CD8-positive, alpha-beta T cell (primary cell): ENCODE measurements at regions of chr1 and their contacts with region 1.

Region 1: GRCh38 chr1:151399890-151400495 is 620 bp downstream of the PSMB4 start:
- DNase-seq: peak in 1 of 9 experiments; percentile 13
- ATAC-seq: no peak
- H3K4me3 ChIP-seq: peak overlapping the region; percentile 90 to 94
- H3K4me3 Mint-ChIP-seq: peak overlapping the region; percentile 89
- H3K27ac ChIP-seq: peak overlapping the region; percentile 93 to 94
- H3K27ac Mint-ChIP-seq: peak overlapping the region; percentile 97
- H3K4me1 ChIP-seq: peaks cover 16% of the 10 kb centered on the region
- H3K4me1 Mint-ChIP-seq: peaks cover 27% of the 10 kb centered on the region
- H3K27me3 ChIP-seq: no peaks in the 10 kb centered on the region
- H3K27me3 Mint-ChIP-seq: no peaks in the 10 kb centered on the region
- CTCF ChIP-seq: no peak

Region 2: DNA sequence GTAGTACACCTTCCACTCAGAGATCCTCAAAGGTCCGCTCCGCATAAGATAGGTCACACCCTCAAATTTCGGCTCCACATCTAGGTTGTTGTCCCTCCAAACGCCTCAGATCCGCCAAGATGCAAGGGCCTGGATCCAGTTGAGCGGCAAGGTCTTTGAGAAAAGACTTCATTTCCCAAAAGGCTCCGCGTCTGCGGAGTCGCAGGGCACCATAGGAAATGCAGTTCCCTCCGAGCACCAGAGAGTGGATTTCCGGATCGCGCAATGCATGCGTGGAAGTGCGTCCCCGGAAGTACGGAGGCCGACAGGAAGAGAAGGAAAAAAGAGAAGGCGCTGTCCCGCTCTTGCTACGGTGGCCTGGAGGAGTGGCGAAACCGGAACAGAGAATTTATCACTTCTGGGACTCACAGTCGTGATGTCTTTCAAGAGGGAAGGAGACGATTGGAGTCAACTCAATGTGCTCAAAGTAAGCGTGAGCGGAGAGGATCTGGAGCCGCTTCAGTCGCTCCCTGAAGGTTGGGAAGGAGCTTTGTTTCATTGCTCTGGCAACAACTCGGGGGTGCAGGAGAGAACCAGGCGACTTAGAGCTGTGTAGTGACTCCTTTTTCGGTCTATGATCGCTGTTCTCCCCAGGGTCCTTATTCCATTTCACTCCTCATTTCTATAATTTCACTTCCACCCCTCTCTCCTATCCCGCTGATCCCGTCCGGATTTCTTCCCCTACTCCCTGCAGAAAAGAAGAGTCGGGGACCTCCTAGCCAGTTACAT is 234.1 kb before region 1 on chr1 and contains the starts of genes LYSMD1 and SCNM1:
- CTCF ChIA-PET with region 1: no interaction called
- POLR2A ChIA-PET with region 1: no interaction called
- intact Hi-C with region 1: loop called in 1 of 2 experiments (anchors 5 kb)
- DNase-seq: peak; percentile 91 to 99 (median 95)
- ATAC-seq: peak; percentile 96
- H3K4me3 ChIP-seq: peak within 1 kb of the TSS; percentile 82 to 94
- H3K4me3 Mint-ChIP-seq: peak within 1 kb of the TSS; percentile 95
- H3K27ac ChIP-seq: peak within 1 kb of the TSS; percentile 72 to 77
- H3K27ac Mint-ChIP-seq: peak within 1 kb of the TSS; percentile 94
- H3K4me1 ChIP-seq: peaks cover 29% of the 10 kb centered on the region
- H3K4me1 Mint-ChIP-seq: peaks cover 50% of the 10 kb centered on the region
- H3K27me3 ChIP-seq: no peaks in the 10 kb centered on the region
- H3K27me3 Mint-ChIP-seq: no peaks in the 10 kb centered on the region
- CTCF ChIP-seq: no peak
- total RNA-seq, gene LYSMD1: 0.49 to 0.94 TPM
- total RNA-seq, gene SCNM1: 35.0 to 40.4 TPM

Region 3: DNA sequence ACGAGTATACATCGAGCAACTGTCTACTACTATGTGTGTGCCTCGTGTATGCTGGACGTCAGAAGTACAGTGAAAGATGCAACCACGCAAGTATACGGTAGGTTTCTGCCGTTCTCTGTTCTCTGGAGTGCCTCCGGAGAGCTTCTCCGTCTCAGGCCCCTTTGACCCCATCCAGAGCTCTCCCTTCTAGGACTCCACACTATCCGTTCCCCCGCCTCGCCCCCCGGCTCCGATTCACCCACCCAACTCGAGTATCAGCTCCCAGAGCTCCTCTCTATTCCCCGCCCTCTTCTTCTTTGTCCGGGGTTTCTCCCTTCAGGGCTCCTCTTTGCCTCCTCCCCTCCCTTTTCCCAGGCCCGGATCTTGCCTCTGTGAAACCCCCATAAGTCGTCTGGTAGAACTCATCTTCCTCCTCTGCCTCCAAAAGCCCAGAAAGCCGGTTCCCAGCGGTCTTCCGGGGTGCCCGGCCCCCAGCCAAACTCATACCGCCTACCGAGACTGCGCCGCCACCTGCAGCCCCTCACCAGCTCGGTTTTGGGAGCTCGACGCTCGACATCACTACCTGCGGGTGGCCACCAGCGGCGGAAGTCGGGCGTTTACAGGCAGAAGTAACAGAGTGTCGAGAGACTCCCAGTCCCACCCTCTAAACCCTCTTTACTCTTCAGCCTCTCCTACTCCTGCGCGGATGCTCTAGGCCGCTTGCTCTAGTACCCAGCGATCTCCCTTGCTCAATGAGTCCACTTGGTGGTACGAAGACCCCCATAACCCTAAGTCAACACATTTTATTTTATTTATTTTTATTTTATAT is 210.2 kb before region 1 on chr1 and contains the start of gene VPS72:
- CTCF ChIA-PET with region 1: no interaction called
- POLR2A ChIA-PET with region 1: no interaction called
- intact Hi-C with region 1: loop called (anchors 2 to 5 kb)
- DNase-seq: peak; percentile 58 to 94 (median 85)
- ATAC-seq: peak; percentile 91
- H3K4me3 ChIP-seq: peak within 1 kb of the TSS; percentile 78 to 89
- H3K4me3 Mint-ChIP-seq: peak within 1 kb of the TSS; percentile 100
- H3K27ac ChIP-seq: peak within 1 kb of the TSS; percentile 69 to 81
- H3K27ac Mint-ChIP-seq: peak within 1 kb of the TSS; percentile 99
- H3K4me1 ChIP-seq: peaks cover 18% of the 10 kb centered on the region
- H3K4me1 Mint-ChIP-seq: peaks cover 37% of the 10 kb centered on the region
- H3K27me3 ChIP-seq: no peaks in the 10 kb centered on the region
- H3K27me3 Mint-ChIP-seq: no peaks in the 10 kb centered on the region
- CTCF ChIP-seq: no peak
- total RNA-seq, gene VPS72: 7.0 to 12.1 TPM

Region 4: DNA sequence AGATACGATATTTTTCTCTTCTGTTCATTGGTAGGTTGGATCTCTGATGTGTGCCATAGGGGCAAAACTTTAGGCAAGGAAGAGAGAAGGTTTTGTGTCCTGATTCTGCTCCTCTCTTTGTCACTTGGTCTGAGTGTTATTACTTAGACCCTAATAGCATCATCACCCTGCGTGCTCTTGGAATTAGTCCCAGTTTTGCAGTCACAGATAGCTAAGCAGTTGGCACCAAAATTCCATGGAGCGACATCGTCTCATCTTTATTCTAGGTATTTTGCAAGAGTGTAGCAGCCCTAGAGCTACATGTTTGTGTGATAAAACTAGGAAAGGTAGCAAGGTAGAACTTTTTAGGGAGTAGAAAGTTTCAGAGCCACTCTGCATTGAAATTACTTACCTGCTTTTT is 177.9 kb before region 1 on chr1:
- CTCF ChIA-PET with region 1: no interaction called
- POLR2A ChIA-PET with region 1: no interaction called
- intact Hi-C with region 1: no loop called
- DNase-seq: no peak
- ATAC-seq: no peak
- H3K4me3 ChIP-seq: no peak overlapping the region
- H3K4me3 Mint-ChIP-seq: no peak overlapping the region
- H3K27ac ChIP-seq: no peak overlapping the region
- H3K27ac Mint-ChIP-seq: no peak overlapping the region
- H3K4me1 ChIP-seq: no peaks in the 10 kb centered on the region
- H3K4me1 Mint-ChIP-seq: peaks cover 13% of the 10 kb centered on the region
- H3K27me3 ChIP-seq: no peaks in the 10 kb centered on the region
- H3K27me3 Mint-ChIP-seq: no peaks in the 10 kb centered on the region
- CTCF ChIP-seq: no peak

Region 5: GRCh38 chr1:151327223-151327902 is 72.6 kb before region 1 on chr1 and contains the start of gene PI4KB:
- CTCF ChIA-PET with region 1: interaction called, 3 read pairs
- POLR2A ChIA-PET with region 1: interaction called, 14 read pairs
- intact Hi-C with region 1: loop called (anchors 1 kb)
- DNase-seq: peak; percentile 76 to 98 (median 87)
- ATAC-seq: peak; percentile 93
- H3K4me3 ChIP-seq: peak within 1 kb of the TSS; percentile 67 to 86
- H3K4me3 Mint-ChIP-seq: peak within 1 kb of the TSS; percentile 88
- H3K27ac ChIP-seq: peak within 1 kb of the TSS; percentile 75 to 98
- H3K27ac Mint-ChIP-seq: peak within 1 kb of the TSS; percentile 93
- H3K4me1 ChIP-seq: peaks cover 15% of the 10 kb centered on the region
- H3K4me1 Mint-ChIP-seq: peaks cover 47% of the 10 kb centered on the region
- H3K27me3 ChIP-seq: no peaks in the 10 kb centered on the region
- H3K27me3 Mint-ChIP-seq: no peaks in the 10 kb centered on the region
- CTCF ChIP-seq: no peak
- total RNA-seq, gene PI4KB: 63.1 to 63.2 TPM

Region 6: DNA sequence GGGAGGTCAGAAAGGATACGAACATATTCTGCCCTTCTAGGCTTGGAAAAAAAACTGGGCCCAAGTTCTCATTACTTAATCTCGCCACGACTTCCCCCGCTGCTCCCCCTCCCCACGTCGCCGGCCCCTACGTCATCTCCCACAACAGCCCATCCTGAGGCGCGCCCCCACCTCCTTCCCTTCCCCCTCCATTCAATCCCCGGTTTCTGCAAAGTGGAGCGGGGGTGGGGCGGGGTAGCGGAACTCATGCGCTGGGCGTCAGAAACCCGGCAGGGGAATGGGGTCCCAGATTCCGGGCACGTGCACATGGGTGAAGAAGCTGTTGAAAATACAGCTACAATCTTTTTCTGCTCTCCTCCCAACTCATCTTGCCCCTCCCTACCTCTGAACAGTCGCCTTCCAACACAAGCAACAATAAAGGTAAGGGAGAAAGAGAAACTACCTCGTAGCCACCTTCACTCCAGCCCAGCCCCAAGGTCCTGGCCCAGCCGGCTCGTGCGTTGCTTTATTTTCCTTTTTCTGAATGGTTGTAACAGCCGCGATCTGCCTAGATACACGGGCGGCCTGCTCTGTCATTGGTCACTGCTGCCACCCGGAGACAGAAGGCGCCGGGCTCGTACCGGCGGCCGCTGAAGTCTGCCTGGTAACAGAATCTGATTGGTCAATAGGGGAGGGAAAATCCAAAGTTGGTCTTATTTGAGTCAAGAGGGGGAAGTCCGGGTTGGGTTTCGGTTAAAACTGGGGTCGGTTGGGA is 53.0 kb before region 1 on chr1 and contains the start of gene RFX5:
- CTCF ChIA-PET with region 1: no interaction called
- POLR2A ChIA-PET with region 1: interaction called, 3 read pairs
- intact Hi-C with region 1: loop called (anchors 1 kb)
- DNase-seq: peak; percentile 85 to 99 (median 93)
- ATAC-seq: peak; percentile 92
- H3K4me3 ChIP-seq: peak within 1 kb of the TSS; percentile 75 to 83
- H3K4me3 Mint-ChIP-seq: peak within 1 kb of the TSS; percentile 95
- H3K27ac ChIP-seq: peak within 1 kb of the TSS; percentile 89 to 98
- H3K27ac Mint-ChIP-seq: peak within 1 kb of the TSS; percentile 99
- H3K4me1 ChIP-seq: peaks cover 15% of the 10 kb centered on the region
- H3K4me1 Mint-ChIP-seq: peaks cover 38% of the 10 kb centered on the region
- H3K27me3 ChIP-seq: no peaks in the 10 kb centered on the region
- H3K27me3 Mint-ChIP-seq: no peaks in the 10 kb centered on the region
- CTCF ChIP-seq: no peak
- total RNA-seq, gene RFX5: 62.6 to 65.9 TPM

Region 7: DNA sequence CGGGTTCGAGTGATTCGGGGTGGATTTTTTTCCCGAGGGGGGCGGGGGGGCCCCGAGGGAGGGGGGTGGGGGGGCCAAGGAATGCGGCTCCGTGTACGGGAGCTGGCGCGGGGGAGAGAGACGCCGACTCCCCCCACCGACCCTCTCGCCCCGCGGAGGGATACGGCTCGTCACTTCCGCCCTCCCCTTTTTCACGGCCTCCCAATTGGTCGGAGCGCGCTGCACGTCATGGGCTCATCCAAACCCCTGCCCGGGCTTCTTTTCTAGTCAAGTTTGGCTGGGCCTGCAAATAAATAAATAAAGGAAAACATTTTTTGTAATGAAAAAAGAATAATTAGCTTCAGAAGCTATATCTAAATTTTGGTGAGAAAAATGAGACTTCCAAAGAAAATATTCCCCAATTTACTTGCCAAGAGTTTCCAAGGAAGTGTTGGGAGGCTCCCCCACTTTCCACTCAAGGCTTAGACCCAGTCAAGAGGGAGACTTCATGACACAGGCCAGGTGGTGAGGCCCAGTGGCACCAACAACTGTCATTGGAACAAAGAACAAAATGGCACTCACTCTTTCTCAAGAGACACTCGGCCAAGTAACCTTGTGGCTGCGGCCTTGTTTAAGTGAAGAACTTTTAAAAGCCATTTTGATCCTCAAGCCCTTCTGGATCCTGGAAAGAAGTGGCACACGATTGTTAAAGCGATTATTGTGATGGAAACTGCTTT is 59.5 kb after region 1 on chr1 and contains the start of gene POGZ:
- CTCF ChIA-PET with region 1: no interaction called
- POLR2A ChIA-PET with region 1: interaction called, 3 read pairs
- intact Hi-C with region 1: loop called (anchors 2 to 5 kb)
- DNase-seq: peak; percentile 89 to 97 (median 95)
- ATAC-seq: peak; percentile 69
- H3K4me3 ChIP-seq: peak within 1 kb of the TSS; percentile 75 to 79
- H3K4me3 Mint-ChIP-seq: peak within 1 kb of the TSS; percentile 89
- H3K27ac ChIP-seq: peak within 1 kb of the TSS; percentile 73 to 88
- H3K27ac Mint-ChIP-seq: peak within 1 kb of the TSS; percentile 93
- H3K4me1 ChIP-seq: peaks cover 18% of the 10 kb centered on the region
- H3K4me1 Mint-ChIP-seq: peaks cover 29% of the 10 kb centered on the region
- H3K27me3 ChIP-seq: peaks cover 0 to 1% of the 10 kb centered on the region in 2 experiments
- H3K27me3 Mint-ChIP-seq: peaks cover 24% of the 10 kb centered on the region
- CTCF ChIP-seq: no peak
- total RNA-seq, gene POGZ: 85.4 to 88.0 TPM

Region 8: DNA sequence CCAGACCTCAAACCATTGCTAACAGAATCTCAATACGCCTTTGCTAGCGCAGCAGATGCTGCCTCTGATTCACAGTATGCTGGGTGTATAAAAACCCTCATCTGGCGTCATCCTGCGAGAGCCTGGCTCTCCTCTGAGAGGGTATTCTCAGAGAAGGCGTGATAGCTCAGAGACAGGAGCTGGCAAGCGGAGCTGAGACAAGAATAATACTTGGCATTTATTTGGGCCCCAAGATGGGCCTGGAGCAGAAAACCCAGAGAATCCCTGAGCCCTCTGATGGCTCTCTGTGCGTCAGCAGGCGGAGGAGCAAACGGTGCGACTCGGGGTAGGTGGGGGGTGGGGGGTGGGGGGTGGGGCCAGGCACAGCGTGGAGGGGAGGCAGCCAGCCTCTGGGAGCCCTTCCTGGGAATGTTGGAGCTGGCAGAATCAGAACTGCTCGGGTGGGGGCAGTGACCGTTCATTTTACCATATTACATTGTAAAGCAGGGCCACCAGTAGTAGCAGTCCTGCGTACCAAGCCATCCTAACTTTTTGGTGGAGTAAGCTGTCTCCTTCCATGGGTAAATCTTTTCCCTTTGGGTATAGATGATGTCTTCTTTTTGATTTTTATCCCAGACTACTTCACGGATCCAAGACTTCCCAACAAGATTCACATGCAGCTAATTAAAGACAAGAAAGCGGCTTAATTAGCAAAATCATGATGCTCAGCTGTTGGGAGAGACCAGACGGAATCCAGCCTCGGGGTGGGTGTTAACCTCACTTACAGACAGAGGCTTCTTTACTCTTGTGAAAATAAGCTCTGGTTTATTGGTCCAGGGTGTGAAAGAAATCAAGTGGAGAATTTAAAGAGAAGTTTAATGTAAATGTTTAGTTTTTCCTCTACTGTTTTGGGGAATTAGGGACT is 328.4 kb after region 1 on chr1:
- CTCF ChIA-PET with region 1: no interaction called
- POLR2A ChIA-PET with region 1: no interaction called
- intact Hi-C with region 1: no loop called
- DNase-seq: no peak
- ATAC-seq: no peak
- H3K4me3 ChIP-seq: no peak overlapping the region
- H3K4me3 Mint-ChIP-seq: no peak overlapping the region
- H3K27ac ChIP-seq: no peak overlapping the region
- H3K27ac Mint-ChIP-seq: no peak overlapping the region
- H3K4me1 ChIP-seq: no peaks in the 10 kb centered on the region
- H3K4me1 Mint-ChIP-seq: no peaks in the 10 kb centered on the region
- H3K27me3 ChIP-seq: peaks cover 5 to 9% of the 10 kb centered on the region in 2 experiments
- H3K27me3 Mint-ChIP-seq: peaks cover 67% of the 10 kb centered on the region
- CTCF ChIP-seq: no peak

Region 9: GRCh38 chr1:151790071-151790940 is 390.3 kb after region 1 on chr1 and contains the start of gene TDRKH:
- CTCF ChIA-PET with region 1: interaction called, 3 read pairs
- POLR2A ChIA-PET with region 1: no interaction called
- intact Hi-C with region 1: loop called in 1 of 2 experiments (anchors 1 kb)
- DNase-seq: peak; percentile 95 to 99 (median 97)
- ATAC-seq: peak; percentile 94
- H3K4me3 ChIP-seq: peak within 1 kb of the TSS; percentile 68 to 82
- H3K4me3 Mint-ChIP-seq: peak within 1 kb of the TSS; percentile 98
- H3K27ac ChIP-seq: peak within 1 kb of the TSS; percentile 29 to 37
- H3K27ac Mint-ChIP-seq: peak within 1 kb of the TSS; percentile 89
- H3K4me1 ChIP-seq: peaks cover 12% of the 10 kb centered on the region
- H3K4me1 Mint-ChIP-seq: peaks cover 30% of the 10 kb centered on the region
- H3K27me3 ChIP-seq: no peaks in the 10 kb centered on the region
- H3K27me3 Mint-ChIP-seq: no peaks in the 10 kb centered on the region
- CTCF ChIP-seq: no peak
- total RNA-seq, gene TDRKH: 3.6 to 3.9 TPM